Activated B cell treated with CpG ODN at 0.5 μM for 24 hours (primary cell): ENCODE measurements at regions of chr13 and their contacts with region 1.

Region 1: GRCh38 chr13:23357349-23357748 is 76.2 kb downstream of the SACS start:
- DNase-seq: no peak
- ATAC-seq: no peak
- H3K4me3 Mint-ChIP-seq: no peak overlapping the region
- H3K27ac Mint-ChIP-seq: no peak overlapping the region
- H3K4me1 Mint-ChIP-seq: peaks cover 13% of the 10 kb centered on the region
- H3K27me3 Mint-ChIP-seq: no peaks in the 10 kb centered on the region
- CTCF ChIP-seq: no peak

Region 2: GRCh38 chr13:23212671-23213423 is 144.5 kb before region 1 on chr13:
- CTCF ChIA-PET with region 1: no interaction called
- POLR2A ChIA-PET with region 1: no interaction called
- intact Hi-C with region 1: no loop called
- DNase-seq: no peak
- ATAC-seq: no peak
- H3K4me3 Mint-ChIP-seq: no peak overlapping the region
- H3K27ac Mint-ChIP-seq: no peak overlapping the region
- H3K4me1 Mint-ChIP-seq: no peaks in the 10 kb centered on the region
- H3K27me3 Mint-ChIP-seq: no peaks in the 10 kb centered on the region
- CTCF ChIP-seq: no peak

Region 3: GRCh38 chr13:23289917-23290357 is 67.4 kb before region 1 on chr13:
- CTCF ChIA-PET with region 1: no interaction called
- POLR2A ChIA-PET with region 1: no interaction called
- intact Hi-C with region 1: no loop called
- DNase-seq: no peak
- ATAC-seq: no peak
- H3K4me3 Mint-ChIP-seq: no peak overlapping the region
- H3K27ac Mint-ChIP-seq: no peak overlapping the region
- H3K4me1 Mint-ChIP-seq: no peaks in the 10 kb centered on the region
- H3K27me3 Mint-ChIP-seq: peaks cover 3% of the 10 kb centered on the region
- CTCF ChIP-seq: no peak

Region 4: DNA sequence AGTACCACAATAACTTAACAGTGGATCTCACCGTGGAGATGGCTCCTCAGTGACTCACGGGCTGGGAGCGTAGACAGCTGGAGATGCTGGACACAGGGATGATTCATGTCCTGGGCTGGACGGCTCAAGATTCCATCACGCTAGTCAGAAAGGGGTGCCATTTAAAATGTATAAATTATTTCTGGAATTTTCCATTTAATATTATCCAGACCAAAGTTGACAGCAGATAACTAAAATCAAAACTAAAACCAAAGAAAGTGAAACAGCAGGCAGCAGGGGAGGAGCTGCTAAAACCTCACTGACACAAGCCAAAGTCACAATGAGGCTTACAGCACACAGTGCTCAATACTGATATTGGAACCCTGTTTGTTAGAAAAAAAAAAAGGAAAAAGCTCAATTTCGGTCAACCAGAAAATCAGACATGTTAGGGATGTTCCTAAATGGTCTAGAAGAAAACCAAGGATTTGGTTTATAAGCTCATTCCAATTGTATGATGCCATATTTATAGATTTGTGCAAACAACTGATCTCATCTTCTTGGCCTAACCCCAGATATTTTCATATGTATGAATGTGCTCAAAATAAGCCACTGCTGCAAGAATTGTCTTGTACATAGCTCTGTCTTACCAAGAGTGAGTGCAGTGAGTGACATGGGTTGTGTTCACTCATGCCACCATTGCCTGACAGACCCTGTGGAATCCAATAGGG is 35.7 kb before region 1 on chr13:
- CTCF ChIA-PET with region 1: no interaction called
- POLR2A ChIA-PET with region 1: no interaction called
- intact Hi-C with region 1: no loop called
- DNase-seq: no peak
- ATAC-seq: no peak
- H3K4me3 Mint-ChIP-seq: peak overlapping the region; percentile 70
- H3K27ac Mint-ChIP-seq: no peak overlapping the region
- H3K4me1 Mint-ChIP-seq: peaks cover 4% of the 10 kb centered on the region
- H3K27me3 Mint-ChIP-seq: peaks cover 6% of the 10 kb centered on the region
- CTCF ChIP-seq: no peak

Region 5: GRCh38 chr13:23427342-23427843 is 70.0 kb after region 1 on chr13:
- CTCF ChIA-PET with region 1: no interaction called
- POLR2A ChIA-PET with region 1: no interaction called
- intact Hi-C with region 1: no loop called
- DNase-seq: no peak
- ATAC-seq: no peak
- H3K4me3 Mint-ChIP-seq: no peak overlapping the region
- H3K27ac Mint-ChIP-seq: no peak overlapping the region
- H3K4me1 Mint-ChIP-seq: no peaks in the 10 kb centered on the region
- H3K27me3 Mint-ChIP-seq: peaks cover 22% of the 10 kb centered on the region
- CTCF ChIP-seq: no peak

Region 6: GRCh38 chr13:24443366-24443765 is 1086.0 kb after region 1 on chr13:
- CTCF ChIA-PET with region 1: no interaction called
- POLR2A ChIA-PET with region 1: interaction called, 14 read pairs
- intact Hi-C with region 1: no loop called
- DNase-seq: no peak
- ATAC-seq: no peak
- H3K4me3 Mint-ChIP-seq: no peak overlapping the region
- H3K27ac Mint-ChIP-seq: no peak overlapping the region
- H3K4me1 Mint-ChIP-seq: no peaks in the 10 kb centered on the region
- H3K27me3 Mint-ChIP-seq: no peaks in the 10 kb centered on the region
- CTCF ChIP-seq: no peak